Activated CD4-positive, alpha-beta memory T cell treated with anti-CD3 and anti-CD28 coated beads for 36 hours (primary cell): ENCODE measurements at regions of chr5 and their contacts with region 1.

Region 1: GRCh38 chr5:113022661-113023060 is 46.1 kb downstream of the DCP2 start:
- DNase-seq: no peak
- H3K4me3 Mint-ChIP-seq: no peak overlapping the region
- H3K27ac Mint-ChIP-seq: peak overlapping the region; percentile 77
- H3K4me1 Mint-ChIP-seq: peaks cover 68% of the 10 kb centered on the region
- H3K27me3 Mint-ChIP-seq: no peaks in the 10 kb centered on the region

Region 2: GRCh38 chr5:112691758-112692157 is 330.9 kb before region 1 on chr5:
- CTCF ChIA-PET with region 1: no interaction called
- POLR2A ChIA-PET with region 1: no interaction called
- intact Hi-C with region 1: no loop called
- DNase-seq: peak; percentile 27
- H3K4me3 Mint-ChIP-seq: no peak overlapping the region
- H3K27ac Mint-ChIP-seq: no peak overlapping the region
- H3K4me1 Mint-ChIP-seq: no peaks in the 10 kb centered on the region
- H3K27me3 Mint-ChIP-seq: peaks cover 22% of the 10 kb centered on the region

Region 3: DNA sequence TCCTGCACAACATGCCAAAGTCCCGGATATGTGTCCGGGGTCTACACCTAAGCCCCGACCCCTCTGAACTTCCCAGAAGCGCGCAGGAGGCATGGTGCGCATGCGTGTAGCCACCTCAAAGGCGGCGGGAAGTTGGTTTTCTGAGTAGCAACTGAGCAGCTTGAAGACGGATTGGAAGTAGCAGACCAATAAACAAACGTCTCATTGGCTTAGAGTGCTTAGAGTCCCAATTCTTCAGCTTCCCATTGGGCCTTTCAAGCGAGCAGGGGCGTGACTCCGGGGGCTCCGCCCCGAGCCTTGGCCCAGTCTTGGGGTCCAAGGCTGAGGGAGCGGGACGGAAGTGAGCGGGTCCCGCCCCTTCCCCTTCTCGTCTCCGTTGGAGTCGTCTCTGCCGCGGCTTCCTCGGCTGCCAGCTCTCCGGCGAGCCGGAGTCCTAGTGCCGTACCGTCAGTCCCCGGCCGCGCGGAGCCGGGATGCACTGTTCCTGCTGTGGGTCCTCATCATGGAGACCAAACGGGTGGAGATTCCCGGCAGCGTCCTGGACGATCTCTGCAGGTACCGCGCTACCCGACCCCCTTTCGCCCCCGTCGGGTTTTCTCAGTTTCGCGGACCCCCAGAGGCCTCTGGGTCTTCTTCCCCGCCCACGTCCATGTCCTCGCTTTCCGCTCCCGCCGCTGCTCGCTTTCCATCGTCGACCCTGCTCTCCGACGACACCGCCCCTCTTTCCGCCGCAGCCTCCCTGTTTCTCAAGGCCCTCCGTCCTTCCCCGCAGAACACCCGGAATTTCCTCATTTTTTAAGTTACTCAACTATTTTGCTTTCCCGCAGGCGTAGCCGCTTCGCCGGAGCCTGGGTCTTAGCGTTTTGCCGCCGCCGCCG is 46.0 kb before region 1 on chr5 and contains the start of gene DCP2:
- CTCF ChIA-PET with region 1: interaction called, 5 read pairs
- POLR2A ChIA-PET with region 1: no interaction called
- intact Hi-C with region 1: loop called (anchors 2 kb)
- DNase-seq: peak; percentile 97
- H3K4me3 Mint-ChIP-seq: peak within 1 kb of the TSS; percentile 85
- H3K27ac Mint-ChIP-seq: peak within 1 kb of the TSS; percentile 98
- H3K4me1 Mint-ChIP-seq: peaks cover 39% of the 10 kb centered on the region
- H3K27me3 Mint-ChIP-seq: no peaks in the 10 kb centered on the region
- total RNA-seq, gene DCP2: 102 TPM

Region 4: GRCh38 chr5:113050721-113051382 is 28.2 kb after region 1 on chr5:
- CTCF ChIA-PET with region 1: no interaction called
- POLR2A ChIA-PET with region 1: no interaction called
- intact Hi-C with region 1: loop called (anchors 1 kb)
- DNase-seq: peak; percentile 77
- H3K4me3 Mint-ChIP-seq: no peak overlapping the region
- H3K27ac Mint-ChIP-seq: peak overlapping the region; percentile 51
- H3K4me1 Mint-ChIP-seq: peaks cover 23% of the 10 kb centered on the region
- H3K27me3 Mint-ChIP-seq: no peaks in the 10 kb centered on the region

Region 5: GRCh38 chr5:113294311-113295110 is 271.9 kb after region 1 on chr5:
- CTCF ChIA-PET with region 1: no interaction called
- POLR2A ChIA-PET with region 1: no interaction called
- intact Hi-C with region 1: loop called (anchors 10 kb)
- DNase-seq: peak; percentile 88
- H3K4me3 Mint-ChIP-seq: peak overlapping the region; percentile 89
- H3K27ac Mint-ChIP-seq: peak overlapping the region; percentile 55
- H3K4me1 Mint-ChIP-seq: peaks cover 16% of the 10 kb centered on the region
- H3K27me3 Mint-ChIP-seq: peaks cover 13% of the 10 kb centered on the region